Gastrocnemius medialis (tissue), 4 donors: ENCODE measurements at regions of chr11 and their contacts with region 1.

Region 1: DNA sequence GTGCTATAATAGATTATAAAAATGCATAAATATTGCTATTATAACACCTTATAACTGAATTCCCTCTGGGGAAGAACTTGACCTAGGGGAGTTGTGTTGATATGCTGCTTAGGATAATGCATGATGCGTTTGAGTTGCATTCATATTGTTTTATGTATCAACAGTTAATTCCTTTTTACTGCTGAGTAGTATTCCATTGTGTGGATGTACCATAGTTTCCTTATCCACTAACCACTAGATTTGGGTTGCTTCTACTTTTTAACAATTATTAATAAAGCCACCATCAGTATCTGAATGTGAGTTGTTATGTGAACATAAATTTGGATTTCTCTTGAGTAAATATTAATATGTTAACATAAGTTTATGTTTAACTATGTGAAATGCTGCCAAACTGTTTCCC is 19.7 kb upstream of the LRRC4C start:
- DNase-seq: no peak
- ATAC-seq: no peak
- H3K4me3 ChIP-seq: no peak overlapping the region
- H3K27ac ChIP-seq: no peak overlapping the region
- H3K4me1 ChIP-seq: no peaks in the 10 kb centered on the region
- H3K27me3 ChIP-seq: no peaks in the 10 kb centered on the region
- CTCF ChIP-seq: no peak
- POLR2A ChIP-seq: no peak

Region 2: DNA sequence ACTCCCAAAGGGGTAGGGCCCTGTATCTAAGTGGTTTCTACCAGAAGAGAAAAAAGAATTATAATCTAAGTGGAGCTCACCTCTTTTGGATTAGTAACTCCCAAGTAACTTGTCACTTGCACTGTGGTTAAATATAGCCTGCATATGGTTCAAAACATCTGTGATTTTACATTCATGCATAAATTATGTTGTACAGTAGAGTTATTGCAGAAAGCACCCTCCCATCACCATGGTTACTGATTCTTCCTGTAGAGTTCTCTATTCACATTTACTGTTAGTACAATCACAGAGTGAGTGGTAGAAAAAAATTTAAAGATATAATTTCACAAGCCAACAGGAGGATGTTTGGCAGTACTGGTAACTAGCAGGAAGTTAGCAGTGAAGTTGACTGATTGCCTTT is 100.1 kb before region 1 on chr11:
- in situ Hi-C with region 1: no loop called
- intact Hi-C with region 1: no loop called
- DNase-seq: no peak
- ATAC-seq: no peak
- H3K4me3 ChIP-seq: no peak overlapping the region
- H3K27ac ChIP-seq: no peak overlapping the region
- H3K4me1 ChIP-seq: no peaks in the 10 kb centered on the region
- H3K27me3 ChIP-seq: no peaks in the 10 kb centered on the region
- CTCF ChIP-seq: no peak
- POLR2A ChIP-seq: no peak

Region 3: DNA sequence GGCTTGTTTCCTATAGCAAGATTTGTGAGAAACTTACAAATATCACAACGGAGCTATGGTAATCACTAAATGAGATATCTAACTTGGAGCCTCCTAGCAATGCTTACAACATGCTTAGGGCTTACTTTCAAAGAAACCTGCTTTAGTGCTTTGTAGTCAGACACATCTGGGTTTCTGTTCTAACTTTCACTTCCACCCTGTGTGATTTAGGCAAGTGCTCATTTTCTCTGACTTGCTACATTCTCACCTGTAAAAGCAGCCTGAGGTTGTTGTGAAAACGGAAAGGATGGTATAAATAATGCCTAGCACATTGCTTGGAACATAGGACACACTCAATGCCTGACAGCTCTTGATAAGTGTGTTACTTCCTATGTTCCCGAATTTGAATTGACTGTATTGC is 65.3 kb before region 1 on chr11:
- in situ Hi-C with region 1: loop called in 1 of 4 experiments (anchors 10 kb)
- intact Hi-C with region 1: no loop called
- DNase-seq: no peak
- ATAC-seq: no peak
- H3K4me3 ChIP-seq: no peak overlapping the region
- H3K27ac ChIP-seq: no peak overlapping the region
- H3K4me1 ChIP-seq: no peaks in the 10 kb centered on the region
- H3K27me3 ChIP-seq: no peaks in the 10 kb centered on the region
- CTCF ChIP-seq: no peak
- POLR2A ChIP-seq: no peak